HCT116 (cell line): ENCODE measurements at regions of chr7 and their contacts with region 1.

Region 1: DNA sequence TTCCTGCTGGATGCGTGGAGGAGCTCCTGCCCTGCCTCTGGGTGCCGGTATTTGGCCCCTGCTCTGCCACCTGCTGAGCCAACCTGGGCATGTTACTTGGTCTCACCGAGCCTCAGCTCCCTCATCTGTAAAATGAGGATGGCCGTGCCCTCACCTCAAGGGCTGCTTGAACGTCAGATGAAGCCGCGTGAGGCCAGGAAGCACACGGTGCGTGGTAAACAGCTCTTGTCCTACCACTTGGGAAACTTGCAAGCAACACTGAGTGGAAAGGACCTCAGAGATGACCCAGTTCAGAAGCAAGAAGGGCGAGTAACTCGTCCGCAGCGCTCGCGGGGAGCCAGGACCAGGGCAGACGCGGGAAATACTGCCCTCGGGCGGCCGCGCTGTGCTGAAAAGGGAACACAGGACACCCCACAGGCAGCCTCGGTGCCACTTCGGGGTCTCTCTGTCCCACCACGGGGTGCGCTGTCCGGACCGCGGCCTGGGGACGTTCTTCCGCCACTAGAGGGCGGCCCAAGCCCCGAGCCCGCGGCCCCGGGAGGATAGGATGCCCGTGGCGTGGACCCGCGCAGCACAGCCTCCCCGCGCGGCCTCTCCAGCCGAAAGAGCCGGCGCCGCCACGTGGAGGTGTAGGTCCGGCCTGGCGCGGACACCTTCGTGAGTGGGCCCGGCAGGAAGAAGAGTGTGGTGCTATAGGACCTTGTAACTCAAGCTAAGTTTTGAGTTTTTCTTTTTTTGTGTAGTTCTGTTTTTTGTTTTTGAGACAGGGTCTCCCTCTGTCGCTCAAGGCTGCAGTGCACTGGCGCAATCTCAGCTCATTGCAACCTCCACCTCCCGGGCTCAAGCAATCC is 94.1 kb downstream of the PRKAG2 start:
- DNase-seq: peak; percentile 53
- ATAC-seq: peak; percentile 96
- H3K4me3 ChIP-seq: peak overlapping the region; percentile 40 to 54
- H3K27ac ChIP-seq: peak overlapping the region; percentile 62
- H3K4me1 ChIP-seq: peaks cover 7 to 13% of the 10 kb centered on the region in 2 experiments
- H3K27me3 ChIP-seq: no peaks in the 10 kb centered on the region
- CTCF ChIP-seq: peak; percentile 94 to 99 (median 95)
- POLR2A ChIP-seq: no peak
- RAD21 ChIP-seq: peak; percentile 88

Region 2: DNA sequence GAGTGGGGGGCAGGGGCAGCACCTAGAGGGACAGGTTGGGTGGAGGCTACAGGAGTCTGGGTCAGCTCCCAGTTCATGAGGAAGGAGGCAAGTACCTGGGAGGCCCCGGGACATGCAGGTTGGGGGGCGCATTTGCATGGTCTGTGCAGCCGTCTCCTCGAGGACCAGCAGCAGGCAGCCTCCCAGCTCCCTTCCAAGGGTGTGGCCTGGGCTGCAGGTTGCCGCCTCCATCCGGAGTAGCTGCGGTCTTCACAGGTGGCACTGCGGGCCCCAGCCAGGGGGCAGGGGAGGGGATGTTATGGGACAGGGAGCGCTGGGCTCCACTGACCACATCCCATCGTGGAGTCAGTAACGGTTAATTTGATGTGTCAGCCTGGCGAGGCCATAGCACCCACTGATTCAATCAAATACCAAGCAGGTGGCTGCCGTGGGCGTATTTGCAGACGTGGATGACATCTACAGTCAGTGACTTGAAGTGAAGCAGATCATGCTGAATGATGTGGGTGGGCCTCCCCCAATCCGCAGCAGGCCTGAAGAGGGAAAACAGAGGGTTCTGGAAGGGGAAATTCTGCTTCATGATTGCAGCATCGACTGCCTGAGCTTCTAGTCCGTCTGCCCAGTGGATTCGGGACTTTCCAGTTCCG is 12.5 kb after region 1 on chr7:
- CTCF ChIA-PET with region 1: interaction called, 35 read pairs
- POLR2A ChIA-PET with region 1: no interaction called
- RAD21 ChIA-PET with region 1: no interaction called
- intact Hi-C with region 1: no loop called
- DNase-seq: no peak
- ATAC-seq: no peak
- H3K4me3 ChIP-seq: no peak overlapping the region
- H3K27ac ChIP-seq: no peak overlapping the region; the same call in 1 of the 2 replicates
- H3K4me1 ChIP-seq: peaks cover 26 to 53% of the 10 kb centered on the region in 2 experiments
- H3K27me3 ChIP-seq: no peaks in the 10 kb centered on the region
- CTCF ChIP-seq: no peak
- POLR2A ChIP-seq: no peak
- RAD21 ChIP-seq: no peak

Region 3: DNA sequence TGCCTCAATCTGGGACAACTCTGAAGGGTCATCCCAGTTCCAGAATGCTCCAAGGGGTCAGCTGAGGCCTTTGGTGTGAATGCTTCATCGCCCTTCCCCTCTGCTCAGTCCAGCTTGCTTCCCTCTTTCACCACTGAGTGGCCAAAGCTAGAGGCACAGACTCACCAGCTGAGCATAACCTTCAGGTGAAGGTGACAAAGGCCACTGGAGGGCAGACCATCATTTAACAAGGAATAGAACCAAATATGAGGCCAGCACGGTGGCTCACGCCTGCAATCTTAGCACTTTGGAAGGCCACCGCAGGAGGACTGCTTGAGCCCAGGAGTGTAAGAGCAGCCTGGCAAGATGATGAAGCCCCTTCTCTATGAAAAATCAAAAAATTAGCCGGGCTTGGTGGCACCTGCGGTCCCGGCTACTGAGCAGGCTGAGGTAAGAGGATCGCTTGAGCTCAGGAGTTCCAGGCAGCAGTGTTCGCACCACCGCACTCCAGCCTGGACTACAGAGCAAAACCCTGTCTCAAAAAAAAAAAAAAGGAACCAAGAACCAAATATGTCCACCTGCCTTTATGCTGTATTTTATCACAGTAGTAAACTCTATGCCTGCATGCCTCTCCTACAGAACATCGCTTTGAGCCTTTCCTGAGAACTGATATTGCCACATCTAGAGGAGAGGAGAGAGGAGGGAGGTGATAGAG is 80.7 kb after region 1 on chr7:
- CTCF ChIA-PET with region 1: no interaction called
- POLR2A ChIA-PET with region 1: no interaction called
- RAD21 ChIA-PET with region 1: no interaction called
- intact Hi-C with region 1: no loop called
- DNase-seq: no peak
- ATAC-seq: no peak
- H3K4me3 ChIP-seq: no peak overlapping the region
- H3K27ac ChIP-seq: no peak overlapping the region
- H3K4me1 ChIP-seq: no peaks in the 10 kb centered on the region
- H3K27me3 ChIP-seq: no peaks in the 10 kb centered on the region
- CTCF ChIP-seq: peak in 2 of 3 experiments; percentile 1 to 29; a peak in 1 of 6 replicates
- POLR2A ChIP-seq: no peak
- RAD21 ChIP-seq: no peak

Region 4: GRCh38 chr7:151876899-151877777 is 94.3 kb after region 1 on chr7 and contains the start of gene PRKAG2:
- CTCF ChIA-PET with region 1: no interaction called
- POLR2A ChIA-PET with region 1: no interaction called
- RAD21 ChIA-PET with region 1: no interaction called
- intact Hi-C with region 1: loop called (anchors 5 kb)
- DNase-seq: no peak
- ATAC-seq: peak; percentile 58
- H3K4me3 ChIP-seq: peak within 1 kb of the TSS; percentile 57 to 66
- H3K27ac ChIP-seq: peak within 1 kb of the TSS; percentile 45; the same call in 1 of the 2 replicates
- H3K4me1 ChIP-seq: peaks cover 6 to 33% of the 10 kb centered on the region in 2 experiments; a peak in 3 of 4 replicates
- H3K27me3 ChIP-seq: no peaks in the 10 kb centered on the region
- CTCF ChIP-seq: no peak
- POLR2A ChIP-seq: no peak
- RAD21 ChIP-seq: no peak
- total RNA-seq, gene PRKAG2: 23.6 TPM

Region 5: GRCh38 chr7:151936207-151936606 is 153.4 kb after region 1 on chr7:
- CTCF ChIA-PET with region 1: interaction called, 3 read pairs
- POLR2A ChIA-PET with region 1: no interaction called
- RAD21 ChIA-PET with region 1: interaction called in 1 of 2 experiments, 3 read pairs
- intact Hi-C with region 1: loop called (anchors 1 kb)
- DNase-seq: no peak
- ATAC-seq: no peak
- H3K4me3 ChIP-seq: no peak overlapping the region
- H3K27ac ChIP-seq: no peak overlapping the region
- H3K4me1 ChIP-seq: peaks cover 0 to 10% of the 10 kb centered on the region in 2 experiments; a peak in 2 of 4 replicates
- H3K27me3 ChIP-seq: no peaks in the 10 kb centered on the region
- CTCF ChIP-seq: no peak
- POLR2A ChIP-seq: no peak
- RAD21 ChIP-seq: no peak